ENCODE measurements at regions of chr1 and their contacts with region 1.

Region 1: GRCh38 chr1:39901698-39902459 is at the start of gene MYCL:
- DNase-seq: no peak
- H3K4me3 ChIP-seq: peak within 1 kb of the TSS; percentile 63
- CTCF ChIP-seq: peak; percentile 70

Region 2: DNA sequence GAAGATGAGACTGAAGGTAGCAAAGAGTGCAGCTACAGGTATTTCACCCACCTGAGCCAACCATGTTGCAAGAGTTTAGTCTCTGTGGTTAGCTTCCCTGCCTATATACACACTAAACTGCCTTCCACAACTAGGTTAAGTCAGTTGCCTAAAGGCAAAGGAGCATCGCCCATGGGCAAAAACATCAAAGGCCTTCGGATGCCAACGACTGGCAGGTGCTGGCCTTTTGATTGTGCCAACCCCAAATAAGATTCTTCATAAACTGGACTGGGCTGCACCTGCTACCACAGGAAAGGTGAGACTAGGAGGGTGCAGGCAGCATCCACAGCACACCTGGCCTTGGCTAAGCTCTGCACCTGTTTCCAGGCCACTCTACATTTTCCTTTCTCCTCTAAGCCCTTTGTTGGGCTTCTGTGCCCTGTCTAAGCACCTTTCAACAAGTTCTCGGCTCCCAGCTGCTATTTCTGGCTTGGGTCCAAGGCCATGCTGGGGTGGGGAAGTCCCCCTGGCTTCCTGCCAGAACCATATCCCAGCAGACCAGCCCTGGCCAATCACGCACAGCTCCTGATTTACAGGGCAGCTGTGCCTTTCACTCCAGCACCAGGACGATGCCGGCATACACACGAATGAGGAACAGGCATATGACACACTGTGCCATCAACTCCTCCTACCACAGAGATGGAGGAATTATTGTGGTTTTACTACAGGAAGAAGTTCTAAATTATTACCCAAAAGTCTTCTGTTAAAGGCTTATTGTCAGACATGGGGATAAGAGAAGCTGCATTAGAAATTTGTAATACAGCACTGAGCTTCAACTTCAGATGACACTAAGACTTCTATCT is 56.4 kb before region 1 on chr1:
- CTCF ChIA-PET with region 1: interaction called, 27 read pairs
- POLR2A ChIA-PET with region 1: interaction called, 4 read pairs
- DNase-seq: peak; percentile 38
- H3K4me3 ChIP-seq: no peak overlapping the region
- CTCF ChIP-seq: no peak

Region 3: GRCh38 chr1:39857126-39857878 is 44.6 kb before region 1 on chr1:
- CTCF ChIA-PET with region 1: interaction called, 10 read pairs
- POLR2A ChIA-PET with region 1: no interaction called
- DNase-seq: no peak
- H3K4me3 ChIP-seq: no peak overlapping the region
- CTCF ChIP-seq: no peak

Region 4: GRCh38 chr1:40167317-40167716 is 265.4 kb after region 1 on chr1:
- CTCF ChIA-PET with region 1: no interaction called
- POLR2A ChIA-PET with region 1: no interaction called
- DNase-seq: no peak
- H3K4me3 ChIP-seq: no peak overlapping the region
- CTCF ChIP-seq: no peak